ENCODE measurements at regions of chr4 and their contacts with region 1.

Region 1: GRCh38 chr4:151859641-151860040 is 98.8 kb upstream of the GATB start:
- DNase-seq: no peak
- ATAC-seq: no peak

Region 2: GRCh38 chr4:151638020-151638858 is 221.4 kb before region 1 on chr4:
- intact Hi-C with region 1: no loop called
- DNase-seq: no peak
- ATAC-seq: no peak

Region 3: DNA sequence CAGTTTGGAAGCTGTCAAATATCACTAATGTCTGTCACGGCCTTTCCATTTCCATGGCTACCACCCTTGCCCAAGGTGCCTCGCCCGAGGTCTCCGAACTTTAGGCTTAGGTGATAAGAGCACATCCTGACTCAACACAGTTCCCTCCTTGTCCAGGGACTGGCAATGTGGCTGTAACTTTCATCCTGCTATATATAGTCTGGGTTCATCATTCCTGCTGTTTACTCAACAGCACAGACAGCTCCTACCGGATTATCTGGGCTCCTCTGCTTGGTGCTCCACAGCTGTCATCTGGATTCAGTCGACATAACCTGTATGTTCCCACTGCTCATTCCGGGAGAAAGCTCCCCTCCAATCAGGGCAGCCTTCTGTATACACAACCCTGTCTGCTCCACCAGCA is 150.1 kb before region 1 on chr4:
- intact Hi-C with region 1: loop called (anchors 2 kb)
- DNase-seq: no peak
- ATAC-seq: no peak

Region 4: GRCh38 chr4:151991001-151991883 is 131.6 kb after region 1 on chr4:
- intact Hi-C with region 1: no loop called
- DNase-seq: no peak
- ATAC-seq: no peak

Region 5: GRCh38 chr4:152454398-152455011 is 594.9 kb after region 1 on chr4:
- intact Hi-C with region 1: no loop called
- DNase-seq: no peak
- ATAC-seq: no peak

Region 6: GRCh38 chr4:153649572-153649991 is 1789.9 kb after region 1 on chr4:
- intact Hi-C with region 1: no loop called
- DNase-seq: no peak
- ATAC-seq: no peak

Measured in sciatic nerve (tissue), 2 donors.